Aorta (tissue), 5 donors: ENCODE measurements at regions of chr10 and their contacts with region 1.

Region 1: DNA sequence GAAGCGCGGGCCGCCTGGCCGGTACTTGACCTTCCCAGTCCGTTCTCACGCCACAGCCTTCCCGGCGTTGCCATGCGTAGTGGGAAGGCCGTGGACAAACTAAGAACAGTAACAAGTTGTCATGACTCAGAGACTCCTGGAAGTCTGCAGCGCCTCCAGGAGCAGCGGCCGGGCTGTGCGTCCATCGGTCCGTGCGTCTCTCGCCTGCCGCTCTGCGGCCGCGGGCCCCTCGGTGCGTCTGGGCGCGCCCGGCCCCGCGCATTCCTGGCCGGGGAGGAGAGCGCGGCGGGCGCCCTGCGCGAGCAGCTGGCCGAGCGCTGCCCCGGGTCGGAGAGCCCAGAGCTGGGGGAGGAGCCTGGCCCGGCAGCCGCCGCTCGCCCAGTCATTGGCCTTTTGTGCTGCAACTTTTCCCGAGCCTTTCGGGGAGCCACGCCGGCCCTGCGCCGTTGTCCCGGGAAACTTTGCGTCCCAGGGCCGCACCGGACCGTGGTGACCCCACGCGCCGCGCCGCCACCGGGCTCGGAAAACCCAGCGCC is 123.7 kb downstream of the TACC2 start:
- DNase-seq: peak; percentile 92 to 95
- ATAC-seq: peak; percentile 92
- H3K4me3 ChIP-seq: peak overlapping the region; percentile 39 to 57
- H3K27ac ChIP-seq: peak overlapping the region; percentile 83 to 99
- H3K4me1 ChIP-seq: no peaks in the 10 kb centered on the region
- H3K27me3 ChIP-seq: no peaks in the 10 kb centered on the region

Region 2: GRCh38 chr10:121927841-121928527 is 184.7 kb before region 1 on chr10 and contains the start of gene ATE1:
- intact Hi-C with region 1: loop called in 1 of 2 experiments (anchors 5 kb)
- DNase-seq: peak; percentile 92 to 96
- ATAC-seq: peak; percentile 97
- H3K4me3 ChIP-seq: peak within 1 kb of the TSS; percentile 80 to 90
- H3K27ac ChIP-seq: peak within 1 kb of the TSS; percentile 76 to 80
- H3K4me1 ChIP-seq: no peaks in the 10 kb centered on the region
- H3K27me3 ChIP-seq: no peaks in the 10 kb centered on the region
- total RNA-seq, gene ATE1: 26.6 to 30.0 TPM

Region 3: DNA sequence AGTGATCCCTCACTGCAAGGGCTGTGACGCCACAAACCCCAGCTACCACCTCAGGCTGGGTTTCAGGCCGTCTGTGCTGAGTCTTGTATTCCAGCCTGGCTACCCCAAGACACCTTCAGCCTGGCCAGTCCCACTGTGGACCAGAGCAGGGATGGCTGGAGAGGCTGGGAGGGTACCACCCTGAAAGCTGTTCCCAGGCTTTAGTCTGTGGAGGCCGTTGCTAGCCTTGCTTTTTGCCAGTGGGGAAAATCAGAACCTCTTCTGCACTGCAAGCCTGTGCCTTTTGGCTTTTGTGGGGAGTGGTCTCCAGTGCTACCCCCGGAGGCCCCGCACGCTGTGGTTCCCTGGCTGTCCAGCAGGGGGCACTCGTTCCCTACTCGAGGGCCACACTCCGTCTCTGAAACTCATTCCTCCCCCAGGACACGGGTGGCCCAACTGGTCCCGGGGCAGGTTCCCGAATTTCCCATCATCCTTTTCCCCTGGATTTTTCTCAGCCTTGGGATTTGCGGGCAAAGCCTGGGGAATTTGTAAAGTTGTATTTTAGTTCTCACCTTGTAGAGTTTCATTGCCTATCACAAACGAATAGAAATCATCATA is 30.0 kb after region 1 on chr10:
- intact Hi-C with region 1: loop called in 1 of 2 experiments (anchors 2 kb)
- DNase-seq: peak in 1 of 2 donors; percentile 89
- ATAC-seq: peak; percentile 56
- H3K4me3 ChIP-seq: no peak overlapping the region
- H3K27ac ChIP-seq: peak overlapping the region in 1 of 2 donors; percentile 65
- H3K4me1 ChIP-seq: peaks cover 0 to 5% of the 10 kb centered on the region in 2 donors
- H3K27me3 ChIP-seq: no peaks in the 10 kb centered on the region

Region 4: GRCh38 chr10:123069246-123069986 is 956.7 kb after region 1 on chr10:
- intact Hi-C with region 1: no loop called
- DNase-seq: no peak
- ATAC-seq: no peak
- H3K4me3 ChIP-seq: no peak overlapping the region
- H3K27ac ChIP-seq: no peak overlapping the region
- H3K4me1 ChIP-seq: no peaks in the 10 kb centered on the region
- H3K27me3 ChIP-seq: no peaks in the 10 kb centered on the region